BJ (cell line): ENCODE measurements at regions of chr2 and their contacts with region 1.

Region 1: DNA sequence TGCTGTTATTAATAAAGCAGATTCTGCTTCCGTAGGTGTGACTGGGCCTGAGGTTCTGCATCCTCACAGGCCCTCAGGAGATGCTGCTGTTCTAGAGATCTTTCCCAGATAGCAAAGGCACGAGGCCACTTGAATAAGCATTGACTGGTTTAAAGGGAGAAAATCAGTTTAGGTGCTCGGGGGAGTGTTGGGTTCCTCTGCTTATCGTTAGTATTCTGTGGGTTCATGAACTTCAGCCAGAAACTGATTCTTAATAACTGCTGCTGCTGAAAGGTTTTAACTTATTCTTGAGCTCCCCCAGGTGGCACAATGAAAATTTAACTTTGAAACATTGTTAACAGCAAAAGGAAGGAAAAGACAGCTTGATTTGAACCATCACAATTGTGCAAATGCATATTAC is 56.9 kb downstream of the ITGA6 start:
- DNase-seq: no peak
- H3K4me3 ChIP-seq: no peak overlapping the region
- H3K27me3 ChIP-seq: no peaks in the 10 kb centered on the region
- CTCF ChIP-seq: peak; percentile 41

Region 2: DNA sequence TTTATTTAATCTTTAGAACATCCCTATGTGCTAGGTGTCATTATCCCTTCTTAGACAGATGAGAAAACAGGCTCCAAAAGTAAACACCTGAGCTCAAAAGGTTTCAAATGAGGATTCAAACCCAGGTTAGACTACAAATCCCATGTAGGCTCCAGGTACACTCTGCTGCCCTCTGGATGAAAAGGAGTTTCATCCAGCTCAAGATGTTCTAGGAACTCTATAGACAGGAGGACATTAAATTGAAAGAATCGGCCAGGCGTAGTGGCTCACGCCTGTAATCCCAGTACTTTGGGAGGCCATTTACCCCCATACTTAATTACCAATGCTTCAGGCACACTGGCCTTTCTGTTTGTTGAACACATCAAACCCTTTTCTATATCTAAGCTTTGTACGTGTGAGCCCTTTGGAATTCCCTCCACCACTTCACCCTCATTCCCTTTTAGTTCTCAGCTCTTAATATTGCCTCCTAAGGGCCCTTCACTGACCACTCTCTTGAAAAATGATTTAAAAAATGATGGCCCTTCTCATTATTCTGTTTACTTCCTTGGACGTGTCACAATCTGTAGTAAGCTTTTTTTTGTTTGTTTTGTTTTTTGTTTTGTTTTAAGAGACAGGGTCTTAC is 600.9 kb before region 1 on chr2:
- CTCF ChIA-PET with region 1: no interaction called
- POLR2A ChIA-PET with region 1: interaction called, 16 read pairs
- DNase-seq: no peak
- H3K4me3 ChIP-seq: no peak overlapping the region
- H3K27me3 ChIP-seq: no peaks in the 10 kb centered on the region
- CTCF ChIP-seq: no peak

Region 3: GRCh38 chr2:172472446-172473033 is 11.7 kb before region 1 on chr2:
- CTCF ChIA-PET with region 1: interaction called, 30 read pairs
- POLR2A ChIA-PET with region 1: no interaction called
- DNase-seq: no peak
- H3K4me3 ChIP-seq: no peak overlapping the region
- H3K27me3 ChIP-seq: no peaks in the 10 kb centered on the region
- CTCF ChIP-seq: no peak

Region 4: DNA sequence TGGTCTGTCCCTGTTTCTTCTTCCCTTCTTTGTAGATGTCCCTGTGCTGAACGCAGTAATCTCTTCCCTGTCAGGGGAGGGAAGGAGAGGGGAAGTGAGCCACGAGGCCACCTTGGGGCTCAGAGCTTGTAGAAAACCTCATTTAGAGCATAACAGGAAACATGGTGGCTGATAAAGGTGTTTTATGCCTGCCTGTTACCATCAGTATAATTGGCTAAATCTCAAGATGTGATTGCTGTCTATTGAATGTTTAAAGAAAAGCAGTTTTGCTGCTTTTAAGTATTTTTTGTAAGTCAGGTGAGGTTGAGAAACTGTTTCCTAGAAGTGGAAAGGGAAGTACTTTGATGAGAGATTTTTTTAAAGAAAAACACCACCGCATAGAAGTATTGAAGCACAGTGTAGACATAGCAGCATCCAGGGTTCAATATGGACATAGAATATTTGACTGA is 11.9 kb after region 1 on chr2:
- CTCF ChIA-PET with region 1: interaction called, 19 read pairs
- POLR2A ChIA-PET with region 1: no interaction called
- DNase-seq: no peak
- H3K4me3 ChIP-seq: no peak overlapping the region
- H3K27me3 ChIP-seq: no peaks in the 10 kb centered on the region
- CTCF ChIP-seq: no peak